GM10248 (cell line): ENCODE measurements at regions of chr6 and their contacts with region 1.

Region 1: GRCh38 chr6:163554663-163555062 is 140.1 kb downstream of the QKI start:
- DNase-seq: peak; percentile 28
- CTCF ChIP-seq: peak; percentile 35

Region 2: DNA sequence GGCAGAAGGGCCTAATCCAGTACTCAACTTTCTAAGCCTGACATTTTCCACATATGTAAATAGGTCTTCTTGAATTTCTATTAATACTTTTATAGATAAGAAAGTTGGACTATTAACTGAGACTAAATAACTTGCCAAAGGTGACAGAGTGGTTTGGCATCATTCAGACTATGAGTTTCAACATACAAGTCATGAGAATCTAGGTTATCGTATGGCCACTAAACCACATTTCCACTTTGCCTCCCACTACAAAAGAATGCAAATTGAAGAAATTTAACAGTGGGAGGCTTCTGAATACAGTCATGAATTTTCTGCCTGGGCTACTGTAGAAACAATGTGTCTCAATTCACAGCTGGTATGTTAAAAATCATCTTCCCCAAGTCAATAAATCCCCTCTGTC is 1749.8 kb before region 1 on chr6:
- CTCF ChIA-PET with region 1: no interaction called
- POLR2A ChIA-PET with region 1: interaction called, 10 read pairs
- DNase-seq: no peak
- CTCF ChIP-seq: no peak